ENCODE measurements at regions of chr19 and their contacts with region 1.

Region 1: GRCh38 chr19:23470873-23471545 is 75.7 kb upstream of the ZNF91 start:
- DNase-seq: no peak
- H3K4me3 ChIP-seq: peak overlapping the region in 28 of 59 donors; percentile 3 to 53 (median 24)
- H3K27ac ChIP-seq: no peak overlapping the region
- H3K27me3 ChIP-seq: peaks cover 0 to 48% (median 29%) of the 10 kb centered on the region in 45 donors
- CTCF ChIP-seq: no peak

Region 2: GRCh38 chr19:23321948-23322549 is 149.0 kb before region 1 on chr19:
- intact Hi-C with region 1: loop called in 1 of 2 experiments (anchors 2 kb)
- DNase-seq: no peak
- H3K4me3 ChIP-seq: no peak overlapping the region
- H3K27ac ChIP-seq: no peak overlapping the region
- H3K27me3 ChIP-seq: no peaks in the 10 kb centered on the region
- CTCF ChIP-seq: no peak

Region 3: GRCh38 chr19:23460641-23461040 is 10.4 kb before region 1 on chr19:
- intact Hi-C with region 1: no loop called
- DNase-seq: no peak
- H3K4me3 ChIP-seq: no peak overlapping the region
- H3K27ac ChIP-seq: no peak overlapping the region
- H3K27me3 ChIP-seq: no peaks in the 10 kb centered on the region
- CTCF ChIP-seq: no peak

Region 4: GRCh38 chr19:23571175-23571574 is 100.2 kb after region 1 on chr19:
- intact Hi-C with region 1: no loop called
- DNase-seq: no peak
- H3K4me3 ChIP-seq: no peak overlapping the region
- H3K27ac ChIP-seq: no peak overlapping the region
- H3K27me3 ChIP-seq: no peaks in the 10 kb centered on the region
- CTCF ChIP-seq: no peak

Region 5: DNA sequence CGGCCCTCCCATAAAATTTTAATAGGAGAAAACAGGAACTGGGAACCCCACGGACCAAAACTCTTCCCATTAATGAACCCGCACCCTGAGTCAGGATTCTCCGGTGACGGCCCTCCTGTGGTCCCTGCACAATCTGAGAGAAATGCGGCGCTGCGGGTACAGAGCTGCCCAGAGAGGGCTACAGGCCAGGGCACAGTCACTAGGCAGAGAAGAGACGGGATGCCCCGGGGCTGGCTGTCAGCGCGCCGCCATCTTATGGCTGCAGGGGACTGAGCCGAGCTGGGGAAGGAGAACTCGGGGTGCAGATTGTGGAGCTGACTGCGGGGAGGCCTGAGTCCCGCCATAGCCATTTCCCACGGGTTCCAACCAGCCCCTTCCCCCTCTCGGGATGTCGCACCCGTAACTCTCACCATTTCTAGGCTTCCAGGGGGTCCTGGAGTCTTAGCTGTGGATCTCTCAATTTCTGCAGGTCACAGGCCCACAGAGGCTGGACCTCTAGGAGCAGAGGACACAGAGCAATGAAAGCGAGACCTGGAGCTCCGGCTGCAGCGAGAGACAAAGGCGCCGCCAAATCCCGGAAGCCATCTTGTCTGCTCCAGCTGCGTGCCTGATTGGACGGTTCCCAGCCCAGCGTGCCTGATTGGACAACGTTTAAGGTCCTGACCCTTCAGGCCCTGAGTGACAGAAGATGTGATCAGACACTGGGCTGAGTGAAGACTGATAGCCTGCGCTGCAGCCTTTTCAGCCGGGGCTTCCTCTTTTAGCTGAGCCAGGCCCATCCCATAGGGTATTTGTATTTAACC is 215.8 kb after region 1 on chr19 and contains the start of gene ZNF675:
- intact Hi-C with region 1: no loop called
- DNase-seq: peak; percentile 85 to 97 (median 94)
- H3K4me3 ChIP-seq: peak within 1 kb of the TSS; percentile 66 to 98 (median 82)
- H3K27ac ChIP-seq: peak within 1 kb of the TSS; percentile 55 to 95 (median 87)
- H3K27me3 ChIP-seq: no peaks in the 10 kb centered on the region
- CTCF ChIP-seq: peak in 12 of 56 donors; percentile 4 to 22 (median 14)
- total RNA-seq, gene ZNF675: 14.5 to 37.6 (median 25.7) TPM

Region 6: DNA sequence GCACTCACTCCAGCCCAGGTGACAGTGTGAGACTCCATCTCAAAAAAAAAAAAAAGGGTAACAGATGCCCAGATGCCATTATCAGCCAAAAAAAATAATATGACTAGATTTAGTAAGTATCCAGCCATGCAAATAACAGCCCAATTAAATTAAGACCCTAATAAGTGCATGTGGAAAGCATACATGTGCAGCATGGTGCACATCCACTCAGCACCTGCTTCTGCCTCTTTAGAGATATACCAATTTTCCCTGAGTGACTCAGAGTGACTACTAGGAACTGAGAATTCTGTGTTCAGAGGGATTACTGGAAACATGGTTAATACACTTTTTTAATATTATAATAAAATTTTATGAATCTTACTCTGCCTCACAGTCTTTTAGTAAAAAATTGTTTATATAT is 245.8 kb after region 1 on chr19:
- intact Hi-C with region 1: no loop called
- DNase-seq: no peak
- H3K4me3 ChIP-seq: no peak overlapping the region
- H3K27ac ChIP-seq: no peak overlapping the region
- H3K27me3 ChIP-seq: peaks cover 0 to 6% (median 0%) of the 10 kb centered on the region in 45 donors
- CTCF ChIP-seq: no peak

Measured in dorsolateral prefrontal cortex (tissue), 120 donors.